Spleen (tissue), 13 donors: ENCODE measurements at regions of chr11 and their contacts with region 1.

Region 1: GRCh38 chr11:57527056-57527631 is 3.4 kb downstream of the TIMM10 start:
- DNase-seq: peak; percentile 87
- H3K4me3 ChIP-seq: no peak overlapping the region
- H3K27ac ChIP-seq: no peak overlapping the region
- H3K4me1 ChIP-seq: peaks cover 13 to 44% (median 28%) of the 10 kb centered on the region in 6 donors
- H3K27me3 ChIP-seq: no peaks in the 10 kb centered on the region
- CTCF ChIP-seq: peak; percentile 77 to 92 (median 89)
- POLR2A ChIP-seq: no peak

Region 2: GRCh38 chr11:57456960-57457642 is 70.0 kb before region 1 on chr11:
- intact Hi-C with region 1: loop called (anchors 2 kb)
- DNase-seq: peak; percentile 95
- H3K4me3 ChIP-seq: peak overlapping the region in 1 of 8 donors; percentile 71
- H3K27ac ChIP-seq: no peak overlapping the region
- H3K4me1 ChIP-seq: peaks cover 22 to 47% (median 42%) of the 10 kb centered on the region in 6 donors
- H3K27me3 ChIP-seq: peaks cover 5 to 64% (median 39%) of the 10 kb centered on the region in 7 donors
- CTCF ChIP-seq: peak; percentile 93 to 99 (median 98)
- POLR2A ChIP-seq: no peak

Region 3: DNA sequence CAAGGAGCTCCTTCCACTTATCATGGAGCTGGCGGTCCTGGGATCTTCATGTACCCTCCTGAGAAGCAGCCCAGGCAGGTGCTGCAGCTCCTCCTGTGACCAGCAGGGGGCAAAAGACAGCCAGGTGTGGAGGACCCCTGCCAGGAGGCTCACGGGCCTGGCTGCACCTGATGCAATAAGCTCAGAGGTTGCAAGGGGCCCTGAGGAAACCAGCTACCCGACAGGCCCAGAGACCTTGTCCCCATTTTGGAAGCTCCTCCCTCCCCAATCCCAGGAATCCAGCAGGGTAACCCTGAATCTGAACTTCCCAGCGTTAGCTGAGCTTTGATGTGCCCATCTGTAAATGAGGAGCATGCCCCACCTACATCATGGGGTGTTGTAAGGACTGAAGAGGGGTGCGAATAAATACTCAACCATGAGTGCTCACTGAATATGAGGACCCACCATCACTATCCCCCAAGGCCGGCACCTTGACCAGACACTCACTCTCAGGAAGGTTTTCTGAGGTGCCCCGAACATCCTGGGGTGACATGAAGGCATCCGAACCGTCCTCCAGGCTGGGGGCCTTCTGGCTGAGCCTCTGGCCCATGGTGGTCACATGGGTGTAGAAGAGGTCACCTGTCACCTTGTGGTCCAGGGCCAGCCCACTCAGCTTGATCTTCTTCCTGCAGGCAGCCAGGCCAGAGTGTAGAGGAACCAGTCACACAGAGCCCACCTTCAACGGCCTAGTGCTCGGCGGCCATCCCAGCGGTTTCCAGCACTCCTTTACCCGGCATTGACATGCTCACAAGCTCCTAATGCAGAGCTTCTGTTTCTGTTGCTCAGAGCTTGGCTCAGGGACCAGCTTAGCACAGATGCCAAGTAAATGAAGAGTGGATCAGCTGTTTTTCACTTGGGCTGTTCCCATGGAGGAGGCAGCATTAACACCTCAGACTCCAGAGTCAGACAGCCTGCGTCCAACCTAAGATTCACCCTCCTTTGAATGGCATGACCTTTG is 33.3 kb before region 1 on chr11:
- intact Hi-C with region 1: loop called (anchors 5 kb)
- DNase-seq: peak; percentile 90
- H3K4me3 ChIP-seq: no peak overlapping the region
- H3K27ac ChIP-seq: no peak overlapping the region
- H3K4me1 ChIP-seq: peaks cover 0 to 17% (median 9%) of the 10 kb centered on the region in 6 donors
- H3K27me3 ChIP-seq: no peaks in the 10 kb centered on the region
- CTCF ChIP-seq: peak; percentile 72 to 94 (median 87)
- POLR2A ChIP-seq: no peak

Region 4: DNA sequence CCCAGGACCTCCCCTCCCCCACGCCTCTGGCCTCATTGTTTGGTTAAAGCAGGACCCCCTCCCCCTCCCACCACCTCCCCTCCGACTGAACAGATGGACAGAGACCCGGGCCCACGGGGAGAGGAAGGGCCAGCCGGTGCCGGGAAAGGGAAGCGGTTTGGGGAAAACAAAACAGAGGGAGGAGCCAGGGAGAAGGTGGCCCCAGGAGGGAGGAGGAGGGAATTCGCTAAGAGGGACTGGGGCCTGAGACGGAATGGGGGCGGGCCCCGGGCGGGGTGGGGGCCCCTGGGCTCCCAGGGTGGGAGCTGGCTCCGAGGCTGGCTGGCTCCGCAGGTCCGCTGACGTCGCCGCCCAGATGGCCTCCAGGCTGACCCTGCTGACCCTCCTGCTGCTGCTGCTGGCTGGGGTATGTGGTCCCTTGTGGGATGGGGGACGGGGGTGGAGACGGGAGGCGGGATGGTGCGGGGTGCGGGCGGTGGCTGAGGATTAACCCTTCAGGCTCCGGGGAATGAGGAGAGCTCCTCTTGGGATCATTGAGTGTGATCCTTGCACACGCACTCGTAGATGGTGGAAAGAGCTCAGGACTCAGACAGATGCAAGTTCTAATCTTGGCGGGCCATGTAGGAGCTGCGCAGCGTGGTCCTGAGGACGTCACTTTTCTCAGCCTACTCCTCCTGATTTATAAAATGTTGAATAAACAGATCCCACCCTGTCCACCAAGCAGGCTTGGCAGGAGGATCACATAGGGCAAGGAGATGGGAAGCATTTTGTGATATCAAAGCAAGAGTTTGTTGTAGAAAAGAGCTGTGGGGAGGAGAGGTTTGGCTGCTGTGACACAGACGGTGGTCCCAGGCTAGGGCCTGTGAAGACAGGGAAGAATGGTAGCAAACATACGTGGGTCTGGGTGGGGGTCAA is 71.0 kb after region 1 on chr11:
- intact Hi-C with region 1: no loop called
- DNase-seq: peak; percentile 79
- H3K4me3 ChIP-seq: peak overlapping the region; percentile 25 to 73 (median 42)
- H3K27ac ChIP-seq: peak overlapping the region in 7 of 8 donors; percentile 36 to 87 (median 78)
- H3K4me1 ChIP-seq: peaks cover 0 to 36% (median 4%) of the 10 kb centered on the region in 6 donors
- H3K27me3 ChIP-seq: peaks cover 0 to 27% (median 0%) of the 10 kb centered on the region in 7 donors
- CTCF ChIP-seq: no peak
- POLR2A ChIP-seq: no peak